Transverse colon (tissue), 4 donors: ENCODE measurements at regions of chrX and their contacts with region 1.

Region 1: GRCh38 chrX:17242470-17242869 is 132.5 kb upstream of the NHS start:
- DNase-seq: peak; percentile 28
- H3K4me3 ChIP-seq: no peak overlapping the region
- H3K27ac ChIP-seq: no peak overlapping the region
- H3K4me1 ChIP-seq: no peaks in the 10 kb centered on the region
- H3K27me3 ChIP-seq: no peaks in the 10 kb centered on the region
- CTCF ChIP-seq: peak; percentile 65 to 83 (median 66)
- EP300 ChIP-seq: no peak
- POLR2A ChIP-seq: no peak

Region 2: DNA sequence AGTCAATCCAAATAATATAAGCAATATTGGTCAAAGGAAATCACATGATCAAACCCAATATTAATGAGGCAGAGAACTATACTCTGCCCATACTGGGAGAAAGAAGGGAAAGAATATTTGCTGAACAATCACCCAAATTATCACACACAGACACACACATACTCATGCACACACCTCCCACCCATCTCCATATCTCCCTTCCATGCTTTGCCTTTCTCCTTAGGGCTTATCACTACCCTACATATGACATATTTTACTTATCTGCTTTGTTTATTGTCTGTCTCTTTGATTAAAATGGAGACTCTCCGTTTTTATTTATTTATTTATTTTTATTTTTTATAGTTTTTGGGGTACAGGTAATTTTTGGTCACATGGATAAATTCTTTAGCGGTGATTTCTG is 19.7 kb after region 1 on chrX:
- in situ Hi-C with region 1: no loop called
- intact Hi-C with region 1: no loop called
- DNase-seq: no peak
- H3K4me3 ChIP-seq: no peak overlapping the region
- H3K27ac ChIP-seq: no peak overlapping the region
- H3K4me1 ChIP-seq: no peaks in the 10 kb centered on the region
- H3K27me3 ChIP-seq: no peaks in the 10 kb centered on the region
- CTCF ChIP-seq: no peak
- EP300 ChIP-seq: no peak
- POLR2A ChIP-seq: no peak

Region 3: DNA sequence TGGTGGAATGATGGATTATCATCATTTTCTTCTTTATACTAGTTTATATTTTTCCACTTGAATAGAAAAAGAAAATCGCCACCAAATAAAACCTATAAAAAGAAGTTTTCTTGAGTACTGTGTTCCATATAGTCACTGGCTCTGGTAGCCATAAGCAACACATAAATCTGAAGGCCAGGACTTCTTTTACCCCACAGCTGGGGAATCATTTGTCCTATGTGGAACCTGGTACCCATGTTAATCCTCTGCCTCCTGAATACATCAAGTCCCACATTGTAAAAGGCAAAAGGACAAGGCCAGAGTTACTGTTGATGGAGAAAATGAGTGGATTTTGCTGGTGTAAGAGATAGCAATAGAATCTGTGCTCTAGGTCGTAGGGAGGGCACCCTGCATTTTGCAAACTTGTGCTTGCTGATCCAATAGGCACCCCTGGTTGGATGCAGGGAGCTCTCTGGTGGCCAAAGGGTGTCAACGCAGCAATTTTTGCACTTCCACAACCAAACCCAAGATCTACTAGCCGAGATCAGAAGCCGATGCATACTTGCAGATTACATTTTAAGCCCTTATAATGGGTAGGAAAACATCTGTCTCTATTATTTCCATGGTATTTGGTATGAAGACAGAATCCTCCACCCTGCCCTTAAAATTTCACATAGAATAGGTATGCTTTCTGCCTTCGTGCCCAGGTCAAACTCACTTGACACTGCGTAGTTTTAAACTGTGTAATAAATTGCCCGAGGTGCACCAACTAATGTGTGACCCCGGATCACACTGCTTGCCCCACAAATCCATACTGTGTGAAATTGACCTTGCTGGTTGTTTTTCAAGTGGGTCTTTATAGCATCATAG is 348.6 kb after region 1 on chrX:
- in situ Hi-C with region 1: loop called in 3 of 4 experiments (anchors 10 to 25 kb)
- intact Hi-C with region 1: no loop called
- DNase-seq: peak; percentile 59
- H3K4me3 ChIP-seq: no peak overlapping the region
- H3K27ac ChIP-seq: peak overlapping the region; percentile 28 to 69 (median 54)
- H3K4me1 ChIP-seq: peaks cover 0 to 11% (median 3%) of the 10 kb centered on the region in 4 donors
- H3K27me3 ChIP-seq: no peaks in the 10 kb centered on the region
- CTCF ChIP-seq: peak; percentile 54 to 61 (median 58)
- EP300 ChIP-seq: no peak
- POLR2A ChIP-seq: no peak

Region 4: GRCh38 chrX:17689971-17690409 is 447.5 kb after region 1 on chrX:
- in situ Hi-C with region 1: loop called (anchors 5 to 25 kb)
- intact Hi-C with region 1: loop called (anchors 5 kb)
- DNase-seq: peak; percentile 41
- H3K4me3 ChIP-seq: no peak overlapping the region
- H3K27ac ChIP-seq: peak overlapping the region in 1 of 4 donors; percentile 37
- H3K4me1 ChIP-seq: peaks cover 0 to 3% (median 0%) of the 10 kb centered on the region in 4 donors
- H3K27me3 ChIP-seq: no peaks in the 10 kb centered on the region
- CTCF ChIP-seq: peak; percentile 52 to 65 (median 62)
- EP300 ChIP-seq: no peak
- POLR2A ChIP-seq: no peak